Right ventricle myocardium inferior (tissue), 1 donor: ENCODE measurements at regions of chr5 and their contacts with region 1.

Region 1: DNA sequence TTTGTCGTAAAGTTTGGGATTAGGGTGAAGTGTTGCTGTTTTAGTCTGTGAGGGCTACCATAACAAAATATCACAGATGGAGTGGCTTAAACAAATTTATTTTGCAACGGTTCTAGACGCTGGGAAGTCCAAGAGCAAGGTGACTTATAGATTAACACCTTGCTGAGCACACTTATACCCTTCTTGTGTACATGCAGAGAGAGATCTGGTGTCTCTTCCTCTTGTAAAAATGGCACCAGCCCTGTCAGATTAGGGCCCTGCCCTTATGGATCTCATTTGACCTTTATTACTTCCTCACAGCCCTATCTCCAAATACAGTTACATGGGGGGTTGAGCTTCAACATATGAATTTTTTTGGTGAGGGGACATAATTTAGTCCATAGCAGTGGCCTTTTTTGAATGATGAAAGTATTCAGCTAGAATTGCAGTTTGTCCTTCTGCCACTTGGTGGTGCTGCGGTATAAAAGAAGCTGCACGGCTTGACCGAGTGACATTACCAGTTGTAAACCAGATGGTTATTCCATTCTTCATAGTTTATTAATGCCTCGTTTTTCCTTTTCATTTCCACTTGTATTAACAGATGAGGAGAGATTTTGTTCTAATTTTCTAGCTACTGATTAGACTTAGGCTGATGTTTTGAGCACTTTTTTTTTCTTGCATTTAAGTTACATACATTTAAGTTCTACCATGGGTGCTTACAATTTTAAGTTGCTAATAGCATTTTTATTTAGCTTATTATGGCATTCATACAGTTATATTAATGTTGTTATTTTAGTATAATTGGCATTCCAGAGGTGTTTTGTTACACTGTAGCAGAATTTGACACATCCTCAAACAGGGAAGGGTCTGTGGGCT is 19.4 kb downstream of the DCP2 start:
- DNase-seq: no peak
- ATAC-seq: peak; percentile 83

Region 2: GRCh38 chr5:113330533-113331208 is 334.7 kb after region 1 on chr5:
- intact Hi-C with region 1: loop called (anchors 2 kb)
- DNase-seq: peak; percentile 73
- ATAC-seq: peak; percentile 69